ENCODE measurements at regions of chr16 and their contacts with region 1.

Region 1: GRCh38 chr16:89217388-89218191 is at the start of gene ZNF778:
- DNase-seq: peak; percentile 64 to 93 (median 76)
- ATAC-seq: peak; percentile 75
- H3K4me3 ChIP-seq: peak within 1 kb of the TSS; percentile 94
- H3K4me3 Mint-ChIP-seq: peak within 1 kb of the TSS; percentile 82
- H3K27ac ChIP-seq: peak within 1 kb of the TSS; percentile 96 to 98
- H3K27ac Mint-ChIP-seq: peak within 1 kb of the TSS; percentile 80
- H3K4me1 ChIP-seq: peaks cover 30% of the 10 kb centered on the region
- H3K4me1 Mint-ChIP-seq: peaks cover 33% of the 10 kb centered on the region
- H3K27me3 ChIP-seq: no peaks in the 10 kb centered on the region
- H3K27me3 Mint-ChIP-seq: no peaks in the 10 kb centered on the region
- CTCF ChIP-seq: no peak
- total RNA-seq, gene ZNF778: 4.0 to 6.7 TPM

Region 2: GRCh38 chr16:88737298-88738150 is 480.1 kb before region 1 on chr16:
- CTCF ChIA-PET with region 1: interaction called, 5 read pairs
- POLR2A ChIA-PET with region 1: no interaction called
- intact Hi-C with region 1: loop called (anchors 1 kb)
- DNase-seq: peak; percentile 44 to 89 (median 72)
- ATAC-seq: peak; percentile 98
- H3K4me3 ChIP-seq: no peak overlapping the region
- H3K4me3 Mint-ChIP-seq: no peak overlapping the region
- H3K27ac ChIP-seq: no peak overlapping the region
- H3K27ac Mint-ChIP-seq: no peak overlapping the region
- H3K4me1 ChIP-seq: peaks cover 15% of the 10 kb centered on the region
- H3K4me1 Mint-ChIP-seq: no peaks in the 10 kb centered on the region
- H3K27me3 ChIP-seq: no peaks in the 10 kb centered on the region
- H3K27me3 Mint-ChIP-seq: no peaks in the 10 kb centered on the region
- CTCF ChIP-seq: peak; percentile 98

Region 3: DNA sequence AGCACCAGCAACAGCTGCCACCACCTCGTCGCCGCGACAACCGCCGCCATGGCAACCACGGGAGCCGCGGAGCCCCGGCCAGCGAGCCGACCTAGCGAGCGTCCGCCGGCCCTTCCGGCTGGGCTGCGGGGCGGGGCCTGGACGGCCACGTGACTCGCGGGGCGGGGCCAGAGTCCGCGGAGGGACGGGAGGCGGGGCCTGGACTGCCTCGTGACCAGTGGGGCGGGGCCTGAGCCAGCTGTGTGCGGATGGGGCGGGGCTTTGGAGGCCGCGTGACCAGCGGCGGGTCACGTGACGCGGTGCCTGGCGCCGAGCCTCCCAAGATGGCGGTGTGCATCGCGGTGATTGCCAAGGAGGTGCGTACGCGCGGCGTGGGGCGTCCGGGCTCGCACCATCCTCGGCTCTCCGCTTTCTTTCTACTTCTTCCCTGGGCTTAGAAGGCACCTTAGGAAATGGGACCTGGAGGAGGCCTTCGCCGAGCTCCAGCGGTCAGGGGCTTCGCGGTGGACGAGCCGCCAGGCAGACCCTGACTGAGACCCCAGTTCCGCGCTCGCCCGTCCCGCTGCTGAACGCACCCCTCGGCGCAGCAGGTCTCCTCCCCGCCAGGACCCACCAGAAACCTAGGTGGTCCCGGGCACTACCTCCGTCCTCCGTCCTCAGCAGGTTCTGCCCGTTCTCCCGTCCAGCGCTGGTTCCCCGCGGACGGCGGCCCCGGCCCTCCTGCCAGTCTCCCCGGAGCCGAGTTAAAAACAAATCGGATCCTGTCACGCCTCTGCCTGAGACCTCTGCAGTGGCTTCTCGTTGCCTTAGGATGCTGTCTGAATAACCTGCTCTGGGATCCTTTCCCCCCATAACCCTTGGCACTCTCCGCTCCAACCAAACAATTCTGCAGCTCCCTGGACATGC is 360.5 kb before region 1 on chr16 and contains the starts of genes GALNS and TRAPPC2L:
- CTCF ChIA-PET with region 1: interaction called, 7 read pairs
- POLR2A ChIA-PET with region 1: interaction called, 14 read pairs
- intact Hi-C with region 1: loop called (anchors 2 to 5 kb)
- DNase-seq: peak; percentile 97 to 99 (median 98)
- ATAC-seq: peak; percentile 90
- H3K4me3 ChIP-seq: peak within 1 kb of the TSS; percentile 100
- H3K4me3 Mint-ChIP-seq: peak within 1 kb of the TSS; percentile 100
- H3K27ac ChIP-seq: peak within 1 kb of the TSS; percentile 69 to 74
- H3K27ac Mint-ChIP-seq: peak within 1 kb of the TSS; percentile 99
- H3K4me1 ChIP-seq: peaks cover 47% of the 10 kb centered on the region
- H3K4me1 Mint-ChIP-seq: peaks cover 27% of the 10 kb centered on the region
- H3K27me3 ChIP-seq: no peaks in the 10 kb centered on the region
- H3K27me3 Mint-ChIP-seq: peaks cover 3% of the 10 kb centered on the region
- CTCF ChIP-seq: no peak
- total RNA-seq, gene GALNS: 18.4 to 19.7 TPM
- total RNA-seq, gene TRAPPC2L: 48.0 to 48.2 TPM

Region 4: GRCh38 chr16:89099905-89100304 is 117.7 kb before region 1 on chr16:
- CTCF ChIA-PET with region 1: no interaction called
- POLR2A ChIA-PET with region 1: no interaction called
- intact Hi-C with region 1: loop called in 1 of 2 experiments (anchors 5 kb)
- DNase-seq: peak in 2 of 14 experiments; percentile 27 to 57
- ATAC-seq: no peak
- H3K4me3 ChIP-seq: no peak overlapping the region
- H3K4me3 Mint-ChIP-seq: peak overlapping the region; percentile 58
- H3K27ac ChIP-seq: no peak overlapping the region
- H3K27ac Mint-ChIP-seq: peak overlapping the region; percentile 99
- H3K4me1 ChIP-seq: peaks cover 82% of the 10 kb centered on the region
- H3K4me1 Mint-ChIP-seq: peaks cover 78% of the 10 kb centered on the region
- H3K27me3 ChIP-seq: no peaks in the 10 kb centered on the region
- H3K27me3 Mint-ChIP-seq: no peaks in the 10 kb centered on the region
- CTCF ChIP-seq: no peak

Region 5: GRCh38 chr16:89171463-89172170 is 46.0 kb before region 1 on chr16 and contains the start of gene CDH15:
- CTCF ChIA-PET with region 1: interaction called, 5 read pairs
- POLR2A ChIA-PET with region 1: interaction called, 6 read pairs
- intact Hi-C with region 1: loop called (anchors 2 kb)
- DNase-seq: peak; percentile 92 to 99 (median 95)
- ATAC-seq: peak; percentile 96
- H3K4me3 ChIP-seq: peak within 1 kb of the TSS; percentile 53
- H3K4me3 Mint-ChIP-seq: peak within 1 kb of the TSS; percentile 79
- H3K27ac ChIP-seq: no peak within 1 kb of the TSS
- H3K27ac Mint-ChIP-seq: no peak within 1 kb of the TSS
- H3K4me1 ChIP-seq: peaks cover 30% of the 10 kb centered on the region
- H3K4me1 Mint-ChIP-seq: peaks cover 8% of the 10 kb centered on the region
- H3K27me3 ChIP-seq: no peaks in the 10 kb centered on the region
- H3K27me3 Mint-ChIP-seq: peaks cover 4% of the 10 kb centered on the region
- CTCF ChIP-seq: no peak
- total RNA-seq, gene CDH15: not detected

Region 6: DNA sequence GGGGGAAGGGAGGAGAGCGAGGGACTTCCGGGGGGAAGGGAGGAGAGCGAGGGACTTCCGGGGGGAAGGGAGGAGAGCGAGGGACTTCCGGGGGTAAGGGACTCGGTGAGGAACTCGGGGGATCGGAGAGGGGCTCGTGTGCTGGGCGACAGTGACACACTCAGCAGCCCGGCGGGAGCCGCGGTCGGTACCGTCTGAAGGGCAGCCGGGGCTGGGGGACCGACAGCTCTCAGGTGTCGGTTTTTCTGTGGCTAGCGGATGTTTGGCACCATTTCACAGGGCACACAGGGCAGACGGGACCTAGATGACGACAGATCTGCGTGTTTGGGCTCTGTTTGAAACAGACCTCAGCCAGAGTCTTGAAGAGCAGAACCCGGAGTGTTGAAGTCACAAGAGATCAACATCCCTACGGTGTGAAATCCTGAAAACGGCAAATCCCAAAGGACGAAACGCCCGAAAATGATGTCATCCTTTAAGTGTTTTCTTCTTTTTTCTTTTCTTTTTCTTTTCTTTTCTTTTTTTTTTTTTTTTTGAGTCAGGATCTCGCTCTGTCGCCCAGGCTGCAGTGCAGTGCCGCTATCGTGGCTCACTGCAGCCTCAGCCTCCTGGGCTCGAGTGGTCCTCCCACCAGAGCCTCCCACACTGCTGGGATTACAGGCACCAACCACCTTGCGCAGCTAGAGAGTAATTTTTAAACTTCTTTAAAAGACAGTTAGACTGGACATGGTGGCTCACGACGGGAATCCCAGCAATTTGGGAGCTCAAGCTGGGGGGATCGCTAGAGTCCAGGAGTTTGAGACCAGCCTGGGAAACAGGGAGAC is 23.8 kb after region 1 on chr16:
- CTCF ChIA-PET with region 1: interaction called, 5 read pairs
- POLR2A ChIA-PET with region 1: interaction called, 14 read pairs
- intact Hi-C with region 1: loop called in 1 of 2 experiments (anchors 2 kb)
- DNase-seq: peak; percentile 62 to 96 (median 78)
- ATAC-seq: peak; percentile 84
- H3K4me3 ChIP-seq: peak overlapping the region; percentile 67
- H3K4me3 Mint-ChIP-seq: peak overlapping the region; percentile 92
- H3K27ac ChIP-seq: peak overlapping the region; percentile 90 to 97
- H3K27ac Mint-ChIP-seq: peak overlapping the region; percentile 97
- H3K4me1 ChIP-seq: peaks cover 25% of the 10 kb centered on the region
- H3K4me1 Mint-ChIP-seq: peaks cover 16% of the 10 kb centered on the region
- H3K27me3 ChIP-seq: no peaks in the 10 kb centered on the region
- H3K27me3 Mint-ChIP-seq: no peaks in the 10 kb centered on the region
- CTCF ChIP-seq: no peak

Region 7: DNA sequence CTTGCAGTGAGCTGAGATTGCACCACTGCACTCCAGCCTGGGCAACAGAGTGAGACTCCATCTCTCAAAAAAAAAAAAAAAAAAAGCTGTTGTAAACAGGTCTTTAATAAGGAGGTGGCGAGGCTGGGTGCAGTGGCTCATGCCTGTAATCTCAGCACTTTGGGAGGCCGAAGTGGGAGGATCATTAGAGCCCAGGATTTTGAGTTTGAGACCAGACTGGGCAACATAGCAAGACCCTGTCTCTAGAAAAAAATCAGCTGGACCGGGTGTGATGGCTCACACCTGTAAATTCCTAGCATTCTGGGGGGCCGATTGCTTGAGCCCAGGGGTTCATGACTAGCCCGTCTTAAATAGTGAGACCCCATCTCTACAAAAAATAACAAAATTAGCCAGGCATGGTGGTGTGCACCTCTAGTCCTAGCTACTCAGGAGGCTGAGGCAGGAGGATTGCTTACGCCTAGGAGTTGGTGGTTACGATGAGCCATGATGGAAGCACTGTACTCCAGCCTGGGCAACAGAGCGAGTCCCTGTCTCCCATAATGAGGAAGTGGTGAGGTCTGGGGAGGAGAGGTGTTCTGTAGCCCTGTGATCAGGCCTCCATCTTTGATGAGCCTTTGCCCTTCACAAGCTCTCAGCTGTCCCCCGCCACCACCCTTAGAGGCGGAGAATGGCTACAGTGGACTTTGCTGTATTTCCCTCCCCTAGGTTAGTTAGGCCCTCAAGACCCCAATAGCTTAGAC is 36.1 kb after region 1 on chr16:
- CTCF ChIA-PET with region 1: no interaction called
- POLR2A ChIA-PET with region 1: no interaction called
- intact Hi-C with region 1: no loop called
- DNase-seq: no peak
- ATAC-seq: no peak
- H3K4me3 ChIP-seq: no peak overlapping the region
- H3K4me3 Mint-ChIP-seq: no peak overlapping the region
- H3K27ac ChIP-seq: no peak overlapping the region
- H3K27ac Mint-ChIP-seq: no peak overlapping the region
- H3K4me1 ChIP-seq: peaks cover 17% of the 10 kb centered on the region
- H3K4me1 Mint-ChIP-seq: peaks cover 19% of the 10 kb centered on the region
- H3K27me3 ChIP-seq: peaks cover 12 to 21% of the 10 kb centered on the region in 2 experiments
- H3K27me3 Mint-ChIP-seq: peaks cover 13% of the 10 kb centered on the region
- CTCF ChIP-seq: no peak

Measured in CD4-positive, alpha-beta T cell (primary cell).